ENCODE measurements at regions of chr6 and their contacts with region 1.

Region 1: DNA sequence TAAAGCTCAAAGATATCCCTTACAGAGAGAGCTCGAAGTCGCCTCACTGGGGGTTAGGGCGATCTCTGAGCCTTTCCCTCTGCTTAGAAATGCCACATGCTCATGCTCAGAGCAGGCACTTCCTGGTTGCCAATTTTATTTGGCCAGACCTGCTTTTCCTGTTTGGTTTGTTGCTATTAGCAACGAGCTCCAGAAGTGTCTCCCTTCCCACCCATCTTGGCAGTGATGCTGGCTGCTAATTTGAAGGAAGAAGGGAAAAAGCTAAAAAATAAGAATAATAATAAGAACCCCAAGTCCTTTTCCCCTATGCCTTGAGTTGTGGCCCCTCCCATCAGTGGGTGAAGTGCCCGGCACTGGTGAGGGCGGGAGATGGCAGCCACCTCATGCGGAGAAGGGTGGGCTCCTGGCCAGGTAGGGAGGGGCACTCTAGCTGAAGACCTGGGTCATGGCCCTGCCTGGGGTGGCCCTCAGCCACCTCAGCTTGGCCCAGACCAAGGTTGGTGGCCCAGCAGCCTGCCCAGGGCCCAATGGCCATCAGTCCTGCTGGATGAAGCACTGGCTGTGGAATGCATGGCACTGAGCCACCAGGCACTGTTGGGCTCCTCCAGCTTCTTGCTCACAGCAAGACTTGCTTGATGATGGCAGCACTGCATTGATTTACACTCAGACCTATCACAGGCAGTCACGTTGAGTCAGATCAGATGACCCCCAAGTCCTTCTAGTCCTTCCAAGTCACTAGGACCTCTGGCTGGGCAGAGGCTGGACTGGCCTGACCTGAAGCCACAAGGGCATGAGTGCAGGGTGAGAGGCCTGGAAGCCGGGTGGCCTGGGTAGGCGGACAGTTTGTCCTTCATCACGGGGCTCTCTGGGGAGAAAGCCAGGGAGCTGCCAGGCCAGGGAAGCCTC is 79.0 kb downstream of the SYNJ2 start:
- DNase-seq: peak; percentile 78 to 97
- H3K4me3 ChIP-seq: peak overlapping the region in 1 of 2 donors; percentile 50
- H3K27ac ChIP-seq: peak overlapping the region; percentile 96 to 99
- H3K4me1 ChIP-seq: peaks cover 10 to 24% of the 10 kb centered on the region in 2 donors
- H3K27me3 ChIP-seq: no peaks in the 10 kb centered on the region
- CTCF ChIP-seq: no peak

Region 2: DNA sequence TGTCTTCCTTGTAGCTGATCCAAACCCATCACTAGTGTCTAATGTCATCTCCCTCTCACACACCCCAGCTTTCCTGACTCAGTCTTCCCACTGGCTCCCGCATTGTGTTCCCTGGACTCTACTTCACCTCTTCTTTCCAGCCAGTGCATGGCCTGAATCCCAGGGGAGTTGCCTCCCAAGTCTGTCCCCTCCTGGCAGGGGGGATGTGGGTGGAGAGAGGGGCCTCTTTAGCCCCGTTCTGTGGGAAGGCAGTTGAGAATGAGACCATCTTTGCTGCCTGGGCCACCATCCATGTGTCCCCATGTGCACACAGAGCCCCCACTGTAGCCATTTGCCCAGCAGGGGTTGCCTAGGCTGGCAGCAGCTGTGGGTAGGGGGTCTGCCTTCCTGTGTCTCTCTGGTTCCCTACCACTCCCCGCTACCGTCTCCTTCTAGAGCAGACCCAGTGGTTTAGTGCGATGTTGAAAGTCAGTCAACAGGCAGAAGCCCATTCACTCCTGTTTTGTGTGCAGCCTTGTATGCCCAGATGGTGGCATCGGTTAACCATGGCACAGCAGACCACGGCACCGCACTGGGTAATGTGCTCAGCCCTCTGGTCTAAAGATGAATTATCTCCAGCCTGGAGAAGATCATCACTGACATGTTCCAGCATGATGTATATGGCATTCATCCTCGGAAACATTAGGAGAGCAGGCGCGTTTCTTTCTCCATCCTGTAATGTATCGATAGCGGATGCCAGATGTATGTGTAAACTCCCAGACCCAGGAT is 416.5 kb before region 1 on chr6:
- intact Hi-C with region 1: loop called (anchors 10 kb)
- DNase-seq: no peak
- H3K4me3 ChIP-seq: no peak overlapping the region
- H3K27ac ChIP-seq: no peak overlapping the region
- H3K4me1 ChIP-seq: no peaks in the 10 kb centered on the region
- H3K27me3 ChIP-seq: no peaks in the 10 kb centered on the region
- CTCF ChIP-seq: peak; percentile 21 to 35 (median 25)

Region 3: DNA sequence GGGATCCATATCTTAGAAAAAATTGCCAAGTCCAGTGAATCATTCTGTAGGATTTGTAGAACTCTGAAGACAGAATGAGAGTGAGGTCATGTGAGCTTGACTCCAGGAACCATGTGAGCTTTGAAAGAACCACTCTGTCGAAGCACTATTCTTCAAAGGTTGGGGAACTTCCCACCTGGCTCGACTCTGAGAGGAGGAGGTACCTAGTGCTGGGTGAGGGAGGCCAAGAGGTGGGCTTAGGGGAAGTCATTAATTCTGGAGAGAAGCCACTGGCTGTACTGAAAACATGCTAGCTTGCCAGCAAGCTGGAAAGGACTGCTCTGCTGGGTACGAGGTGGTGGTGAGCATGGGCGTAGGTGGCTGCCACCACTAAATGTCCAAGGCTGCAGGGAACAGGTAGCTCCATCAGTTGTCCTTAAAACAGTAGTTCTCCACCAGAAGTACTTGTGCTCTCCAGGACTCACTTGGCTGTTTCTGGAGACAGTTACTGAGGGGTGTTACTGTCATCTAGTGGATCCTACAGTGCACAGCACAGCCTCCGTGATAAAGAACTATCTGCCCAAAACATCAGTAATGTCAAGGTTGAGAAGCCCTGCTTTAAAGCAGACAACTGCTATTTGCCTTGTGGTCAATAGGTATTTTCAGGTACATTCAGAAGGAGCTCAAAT is 113.7 kb before region 1 on chr6:
- intact Hi-C with region 1: no loop called
- DNase-seq: no peak
- H3K4me3 ChIP-seq: no peak overlapping the region
- H3K27ac ChIP-seq: no peak overlapping the region
- H3K4me1 ChIP-seq: no peaks in the 10 kb centered on the region
- H3K27me3 ChIP-seq: no peaks in the 10 kb centered on the region
- CTCF ChIP-seq: peak in 1 of 3 experiments; percentile 15

Region 4: GRCh38 chr6:158026054-158026900 is 34.4 kb before region 1 on chr6:
- intact Hi-C with region 1: loop called (anchors 1 kb)
- DNase-seq: peak; percentile 91 to 95
- H3K4me3 ChIP-seq: peak overlapping the region; percentile 36 to 44
- H3K27ac ChIP-seq: peak overlapping the region; percentile 81 to 84
- H3K4me1 ChIP-seq: peaks cover 4 to 25% of the 10 kb centered on the region in 2 donors
- H3K27me3 ChIP-seq: no peaks in the 10 kb centered on the region
- CTCF ChIP-seq: peak; percentile 36 to 50 (median 46)